ENCODE measurements at regions of chr1 and their contacts with region 1.

Region 1: GRCh38 chr1:24744911-24745710 is at the start of gene CLIC4:
- DNase-seq: peak; percentile 100
- H3K4me3 ChIP-seq: peak within 1 kb of the TSS; percentile 92 to 100 (median 98)
- H3K27ac ChIP-seq: peak within 1 kb of the TSS; percentile 99 to 100 (median 100)
- H3K4me1 ChIP-seq: peaks cover 39 to 58% (median 50%) of the 10 kb centered on the region in 4 donors
- H3K27me3 ChIP-seq: no peaks in the 10 kb centered on the region
- CTCF ChIP-seq: peak; percentile 21 to 66 (median 49)
- EP300 ChIP-seq: peak; percentile 17
- POLR2A ChIP-seq: peak; percentile 98
- total RNA-seq, gene CLIC4: 375 to 606 (median 595) TPM

Region 2: GRCh38 chr1:24688621-24689195 is 56.4 kb before region 1 on chr1:
- intact Hi-C with region 1: loop called (anchors 2 kb)
- DNase-seq: no peak
- H3K4me3 ChIP-seq: no peak overlapping the region
- H3K27ac ChIP-seq: no peak overlapping the region
- H3K4me1 ChIP-seq: peaks cover 14 to 23% (median 19%) of the 10 kb centered on the region in 4 donors
- H3K27me3 ChIP-seq: no peaks in the 10 kb centered on the region
- CTCF ChIP-seq: peak; percentile 83 to 86 (median 85)
- EP300 ChIP-seq: no peak
- POLR2A ChIP-seq: no peak

Region 3: DNA sequence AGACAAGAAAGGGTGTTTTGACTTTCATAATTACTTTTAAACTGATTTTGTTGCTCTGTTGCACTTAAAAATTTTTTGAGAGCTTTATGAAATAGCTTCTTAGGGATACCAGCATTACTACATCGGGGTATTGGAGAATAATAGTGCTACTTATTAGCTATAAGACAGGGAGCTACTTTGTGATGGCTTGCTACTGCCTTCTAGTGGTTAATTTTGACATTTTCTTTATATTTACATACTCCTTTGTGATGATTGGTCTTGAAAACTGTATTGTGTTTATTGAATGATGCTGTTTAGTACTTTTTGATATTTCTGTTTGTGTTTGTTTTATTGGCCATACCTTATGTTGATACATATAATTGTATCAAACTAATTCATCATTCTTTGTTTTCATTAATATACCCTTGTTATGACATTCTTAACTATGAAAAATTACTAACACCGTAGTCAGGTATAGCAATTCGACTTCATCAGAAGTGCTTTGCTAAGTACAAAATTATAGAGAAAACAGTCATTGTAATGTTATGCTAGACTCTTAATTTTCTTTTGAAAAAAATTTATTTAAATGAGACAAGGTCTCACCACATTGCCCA is 85.7 kb after region 1 on chr1:
- intact Hi-C with region 1: loop called (anchors 2 kb)
- DNase-seq: no peak
- H3K4me3 ChIP-seq: no peak overlapping the region
- H3K27ac ChIP-seq: peak overlapping the region in 1 of 4 donors; percentile 52
- H3K4me1 ChIP-seq: peaks cover 55 to 67% (median 65%) of the 10 kb centered on the region in 4 donors
- H3K27me3 ChIP-seq: no peaks in the 10 kb centered on the region
- CTCF ChIP-seq: peak; percentile 81 to 86 (median 83)
- EP300 ChIP-seq: no peak
- POLR2A ChIP-seq: no peak

Measured in esophagus muscularis mucosa (tissue), 4 donors.